ENCODE measurements at regions of chr1 and their contacts with region 1.

Region 1: DNA sequence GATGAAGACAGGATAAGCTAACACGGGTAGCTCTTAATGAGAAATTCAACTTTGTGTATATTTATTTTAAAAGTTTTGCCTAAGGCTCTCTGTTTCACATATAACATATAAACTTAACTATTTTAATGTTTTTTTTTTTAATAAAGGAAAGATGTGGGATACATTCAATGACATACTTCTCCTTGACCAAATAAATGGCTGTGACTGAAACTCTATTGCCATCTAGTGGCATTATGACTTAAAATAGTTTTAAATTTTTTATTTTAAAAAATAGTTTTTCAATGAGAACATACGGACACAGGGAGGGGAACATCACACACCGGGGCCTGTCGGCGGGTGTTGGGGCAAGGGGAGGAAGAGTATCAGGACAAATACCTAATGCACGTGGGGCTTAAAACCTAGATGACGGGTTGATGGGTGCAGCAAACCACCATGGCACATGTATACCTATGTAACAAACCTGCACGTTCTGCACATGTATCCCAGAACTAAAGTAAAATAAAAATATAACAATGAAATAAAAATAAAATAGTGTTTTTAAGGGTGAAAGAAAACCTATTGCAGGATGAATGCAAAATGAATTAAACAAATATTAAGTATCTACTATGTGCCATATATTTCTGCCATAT is 83.4 kb downstream of the LYST start:
- DNase-seq: no peak
- H3K4me3 Mint-ChIP-seq: no peak overlapping the region
- H3K27ac Mint-ChIP-seq: no peak overlapping the region
- H3K4me1 Mint-ChIP-seq: no peaks in the 10 kb centered on the region
- H3K27me3 Mint-ChIP-seq: no peaks in the 10 kb centered on the region

Region 2: DNA sequence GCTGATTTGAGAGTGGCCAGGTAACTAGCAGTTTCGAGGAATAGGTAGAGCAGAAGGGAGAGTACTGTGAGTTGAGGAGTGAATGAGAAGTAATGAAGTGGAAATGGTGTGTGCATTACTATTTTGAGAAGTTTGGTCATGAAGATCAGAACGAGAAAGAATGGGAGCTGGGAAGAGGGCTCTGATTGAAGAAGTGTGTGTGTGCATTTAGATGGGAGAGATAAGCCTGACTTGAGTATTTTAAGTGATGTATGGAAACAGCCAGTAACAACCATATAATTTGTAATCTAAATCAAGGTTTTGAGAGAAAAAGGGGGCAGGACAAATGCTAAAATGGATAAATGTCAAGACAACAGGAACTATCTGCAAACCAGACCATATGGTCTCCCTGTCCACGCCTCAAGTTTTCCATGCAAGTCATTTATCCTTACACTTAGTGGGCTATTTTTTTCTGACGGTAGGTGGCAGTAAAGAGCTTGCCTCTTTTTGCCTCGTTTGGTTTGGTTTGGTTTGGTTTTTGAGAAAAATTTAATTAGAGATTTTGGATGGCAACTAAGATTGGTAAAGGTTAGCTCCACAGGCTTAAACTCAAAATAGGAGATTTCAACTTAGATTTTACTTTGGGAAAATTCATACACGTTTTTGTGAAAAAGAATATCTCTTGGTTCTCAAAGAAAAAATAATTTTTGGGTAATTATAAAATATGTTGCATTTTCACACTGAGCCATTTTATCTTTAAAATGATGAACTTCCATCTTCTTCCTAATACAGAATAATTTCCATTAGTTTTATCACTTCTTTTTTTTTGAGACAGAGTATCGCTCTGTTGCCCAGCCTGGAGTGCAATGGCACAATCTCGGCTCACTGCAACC is 269.5 kb before region 1 on chr1:
- CTCF ChIA-PET with region 1: interaction called, 13 read pairs
- DNase-seq: peak; percentile 29
- H3K4me3 Mint-ChIP-seq: no peak overlapping the region
- H3K27ac Mint-ChIP-seq: no peak overlapping the region
- H3K4me1 Mint-ChIP-seq: no peaks in the 10 kb centered on the region
- H3K27me3 Mint-ChIP-seq: peaks cover 30% of the 10 kb centered on the region

Region 3: DNA sequence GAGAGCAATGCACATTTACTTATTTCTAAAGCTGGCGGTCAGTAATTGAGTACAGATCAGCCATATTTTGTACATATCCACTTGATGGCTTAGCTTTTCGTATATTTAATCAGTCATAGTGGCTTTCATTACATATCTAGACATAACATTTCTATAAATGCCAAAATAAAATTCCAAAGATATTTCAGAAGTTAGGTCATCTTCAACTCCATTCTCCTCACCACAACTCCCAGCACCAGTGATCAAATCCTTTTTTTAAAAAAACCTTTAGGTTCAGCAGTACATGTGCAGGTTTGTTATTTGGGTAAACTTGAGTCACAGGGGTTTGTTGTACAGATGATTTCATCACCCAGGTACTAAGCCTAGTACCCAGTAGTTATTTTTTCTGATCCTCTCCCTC is 79.8 kb before region 1 on chr1:
- CTCF ChIA-PET with region 1: no interaction called
- DNase-seq: no peak
- H3K4me3 Mint-ChIP-seq: no peak overlapping the region
- H3K27ac Mint-ChIP-seq: no peak overlapping the region
- H3K4me1 Mint-ChIP-seq: no peaks in the 10 kb centered on the region
- H3K27me3 Mint-ChIP-seq: no peaks in the 10 kb centered on the region

Region 4: DNA sequence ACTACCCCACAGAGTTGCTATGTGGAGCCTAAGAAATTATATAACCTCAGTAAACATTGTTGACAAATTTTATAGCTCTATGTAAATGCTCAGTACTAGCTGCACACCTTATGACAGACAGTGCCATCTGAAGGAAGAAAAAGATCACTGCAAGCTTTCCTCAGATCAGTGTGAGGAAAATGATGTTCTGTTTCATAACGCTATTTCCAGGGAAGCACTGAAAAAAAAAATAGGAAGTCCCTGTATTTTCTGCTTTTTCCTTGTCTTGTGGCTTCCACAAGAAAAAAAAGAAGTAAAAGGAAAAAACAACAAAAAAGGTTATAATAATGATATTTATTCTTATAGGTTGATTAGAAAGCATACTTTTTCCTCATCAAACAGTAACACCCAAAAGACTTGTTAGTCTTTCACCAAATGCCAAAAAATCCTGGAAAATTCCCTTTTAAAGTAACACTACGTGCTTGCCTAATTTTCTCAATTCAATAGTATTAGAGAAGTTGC is 60.2 kb after region 1 on chr1:
- CTCF ChIA-PET with region 1: interaction called, 11 read pairs
- DNase-seq: no peak
- H3K4me3 Mint-ChIP-seq: no peak overlapping the region
- H3K27ac Mint-ChIP-seq: no peak overlapping the region
- H3K4me1 Mint-ChIP-seq: peaks cover 42% of the 10 kb centered on the region
- H3K27me3 Mint-ChIP-seq: no peaks in the 10 kb centered on the region